Naive thymus-derived CD4-positive, alpha-beta T cell (primary cell): ENCODE measurements at regions of chr11 and their contacts with region 1.

Region 1: GRCh38 chr11:123707606-123708205 is 33.8 kb downstream of the ZNF202 start:
- DNase-seq: peak; percentile 29 to 70 (median 58)
- ATAC-seq: peak; percentile 63
- H3K4me3 ChIP-seq: no peak overlapping the region
- H3K4me3 Mint-ChIP-seq: no peak overlapping the region
- H3K27ac ChIP-seq: no peak overlapping the region
- H3K27ac Mint-ChIP-seq: peak overlapping the region in 1 of 9 donors; percentile 18
- H3K4me1 ChIP-seq: no peaks in the 10 kb centered on the region
- H3K4me1 Mint-ChIP-seq: peaks cover 0 to 4% (median 0%) of the 10 kb centered on the region in 7 donors
- H3K27me3 ChIP-seq: no peaks in the 10 kb centered on the region
- H3K27me3 Mint-ChIP-seq: peaks cover 9 to 21% (median 17%) of the 10 kb centered on the region in 5 donors

Region 2: DNA sequence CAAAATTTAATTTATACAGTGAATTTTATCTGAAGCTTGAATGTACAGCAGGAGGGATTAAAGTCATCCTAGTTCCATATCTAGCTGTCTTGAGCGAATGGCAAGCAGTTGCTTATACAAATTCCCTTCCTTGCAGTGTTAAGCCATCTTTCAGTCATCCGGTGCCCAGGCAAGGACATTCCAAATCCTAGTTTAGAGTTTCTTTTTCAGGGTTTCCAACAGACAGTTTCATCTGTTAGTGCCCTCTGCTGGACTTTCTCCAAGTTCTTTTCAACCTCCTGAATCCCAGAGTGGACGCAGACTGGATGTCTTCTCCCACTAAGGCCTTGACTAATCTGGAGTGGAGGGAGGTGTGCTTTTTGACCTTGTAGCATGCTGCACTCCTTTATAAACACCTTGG is 232.2 kb before region 1 on chr11:
- CTCF ChIA-PET with region 1: no interaction called
- POLR2A ChIA-PET with region 1: no interaction called
- intact Hi-C with region 1: no loop called
- DNase-seq: no peak
- ATAC-seq: no peak
- H3K4me3 ChIP-seq: no peak overlapping the region
- H3K4me3 Mint-ChIP-seq: no peak overlapping the region
- H3K27ac ChIP-seq: no peak overlapping the region
- H3K27ac Mint-ChIP-seq: no peak overlapping the region
- H3K4me1 ChIP-seq: no peaks in the 10 kb centered on the region
- H3K4me1 Mint-ChIP-seq: peaks cover 0 to 54% (median 5%) of the 10 kb centered on the region in 7 donors
- H3K27me3 ChIP-seq: no peaks in the 10 kb centered on the region
- H3K27me3 Mint-ChIP-seq: no peaks in the 10 kb centered on the region

Region 3: GRCh38 chr11:123511037-123511870 is 196.5 kb before region 1 on chr11:
- CTCF ChIA-PET with region 1: no interaction called
- POLR2A ChIA-PET with region 1: no interaction called
- intact Hi-C with region 1: loop called in 1 of 2 experiments (anchors 2 kb)
- DNase-seq: peak; percentile 19 to 75 (median 50)
- ATAC-seq: peak; percentile 96
- H3K4me3 ChIP-seq: no peak overlapping the region
- H3K4me3 Mint-ChIP-seq: no peak overlapping the region
- H3K27ac ChIP-seq: no peak overlapping the region
- H3K27ac Mint-ChIP-seq: peak overlapping the region in 1 of 9 donors; percentile 58
- H3K4me1 ChIP-seq: peaks cover 0 to 3% of the 10 kb centered on the region in 2 donors
- H3K4me1 Mint-ChIP-seq: peaks cover 4 to 50% (median 6%) of the 10 kb centered on the region in 7 donors
- H3K27me3 ChIP-seq: no peaks in the 10 kb centered on the region
- H3K27me3 Mint-ChIP-seq: peaks cover 0 to 3% (median 0%) of the 10 kb centered on the region in 5 donors

Region 4: DNA sequence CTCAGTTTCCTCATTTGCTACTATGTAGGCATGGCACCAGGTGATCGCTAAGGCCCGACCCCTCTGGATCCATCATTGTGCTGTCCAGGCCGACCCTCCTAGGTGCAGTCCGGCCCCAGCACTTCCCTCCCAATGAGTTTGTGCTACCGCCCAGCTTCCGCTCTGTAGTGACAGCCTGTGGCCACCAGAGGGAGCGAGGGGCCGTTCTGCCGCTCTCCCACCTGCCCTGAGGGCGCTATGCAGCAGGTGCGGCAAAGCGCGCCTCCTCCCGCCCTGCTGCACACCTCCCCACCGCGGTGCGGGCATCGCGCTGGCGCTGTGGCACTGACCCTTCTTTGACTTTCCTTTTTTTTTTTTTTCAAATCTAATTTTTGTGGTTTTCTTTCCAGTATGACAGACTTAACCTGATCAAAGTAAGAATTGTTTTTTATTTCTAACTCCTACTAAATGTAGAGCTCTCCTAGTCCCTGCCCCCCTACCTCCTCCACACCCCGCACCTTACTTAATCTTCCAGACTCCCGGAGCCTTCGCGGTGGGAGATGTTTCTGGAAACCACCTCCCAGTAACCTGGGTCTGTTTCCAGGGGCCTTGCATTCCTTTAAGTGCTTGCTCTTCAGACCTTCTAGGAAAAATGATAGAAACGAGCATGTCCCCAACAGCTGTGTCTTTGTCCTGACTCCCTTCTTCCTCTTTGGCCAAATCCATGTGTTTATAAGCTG is 127.0 kb before region 1 on chr11:
- CTCF ChIA-PET with region 1: interaction called, 26 read pairs
- POLR2A ChIA-PET with region 1: interaction called, 3 read pairs
- intact Hi-C with region 1: loop called (anchors 1 to 2 kb)
- DNase-seq: peak; percentile 43 to 71 (median 56)
- ATAC-seq: peak; percentile 91
- H3K4me3 ChIP-seq: no peak overlapping the region
- H3K4me3 Mint-ChIP-seq: peak overlapping the region in 5 of 10 donors; percentile 9 to 62 (median 25)
- H3K27ac ChIP-seq: no peak overlapping the region
- H3K27ac Mint-ChIP-seq: peak overlapping the region in 2 of 9 donors; percentile 4 to 36
- H3K4me1 ChIP-seq: peaks cover 0 to 4% of the 10 kb centered on the region in 2 donors
- H3K4me1 Mint-ChIP-seq: peaks cover 7 to 30% (median 18%) of the 10 kb centered on the region in 7 donors
- H3K27me3 ChIP-seq: no peaks in the 10 kb centered on the region
- H3K27me3 Mint-ChIP-seq: peaks cover 0 to 4% (median 0%) of the 10 kb centered on the region in 5 donors

Region 5: DNA sequence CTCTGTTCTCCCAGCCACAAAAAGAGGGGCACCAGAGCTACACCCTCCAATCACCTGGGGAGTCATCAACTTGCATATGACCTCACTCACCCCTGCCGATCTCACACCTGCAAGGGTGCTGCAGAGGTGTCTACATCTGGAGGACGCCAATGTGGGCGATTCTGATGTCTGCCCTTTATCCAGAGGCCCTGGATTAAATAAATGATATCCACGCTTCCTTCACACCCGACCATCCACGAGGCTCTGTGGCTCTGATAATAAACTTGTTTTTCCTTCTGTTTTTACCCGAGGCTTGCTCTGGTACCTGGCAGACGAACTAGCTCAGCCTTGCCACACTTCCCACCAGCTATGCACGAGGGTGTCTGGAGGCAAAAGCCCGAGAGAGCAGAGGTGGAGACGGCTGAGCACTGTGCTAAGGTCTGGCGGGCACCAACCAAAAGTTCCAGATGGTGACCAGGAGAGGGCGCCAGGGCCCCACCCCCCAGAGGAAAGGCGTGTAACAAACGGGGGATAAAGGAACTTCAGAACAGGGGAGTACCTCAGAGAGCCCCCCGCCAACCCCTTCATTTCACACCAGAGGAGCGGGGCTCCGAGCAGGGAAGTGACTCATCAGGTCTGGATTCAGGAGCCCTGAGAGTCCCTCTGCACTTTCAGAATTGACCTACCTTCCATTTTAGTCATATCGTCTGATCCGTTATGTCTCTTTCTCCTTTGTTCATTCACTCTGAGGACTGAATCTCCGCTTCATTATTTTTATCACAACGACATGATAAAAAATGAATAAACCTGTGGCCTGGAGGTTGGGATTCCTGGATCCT is 66.8 kb before region 1 on chr11:
- CTCF ChIA-PET with region 1: interaction called, 99 read pairs
- POLR2A ChIA-PET with region 1: no interaction called
- intact Hi-C with region 1: loop called (anchors 1 kb)
- DNase-seq: peak; percentile 29 to 65 (median 56)
- ATAC-seq: peak; percentile 77
- H3K4me3 ChIP-seq: no peak overlapping the region
- H3K4me3 Mint-ChIP-seq: no peak overlapping the region
- H3K27ac ChIP-seq: no peak overlapping the region
- H3K27ac Mint-ChIP-seq: peak overlapping the region in 1 of 9 donors; percentile 69
- H3K4me1 ChIP-seq: no peaks in the 10 kb centered on the region
- H3K4me1 Mint-ChIP-seq: peaks cover 0 to 4% (median 2%) of the 10 kb centered on the region in 7 donors
- H3K27me3 ChIP-seq: no peaks in the 10 kb centered on the region
- H3K27me3 Mint-ChIP-seq: peaks cover 11 to 46% (median 27%) of the 10 kb centered on the region in 5 donors

Region 6: DNA sequence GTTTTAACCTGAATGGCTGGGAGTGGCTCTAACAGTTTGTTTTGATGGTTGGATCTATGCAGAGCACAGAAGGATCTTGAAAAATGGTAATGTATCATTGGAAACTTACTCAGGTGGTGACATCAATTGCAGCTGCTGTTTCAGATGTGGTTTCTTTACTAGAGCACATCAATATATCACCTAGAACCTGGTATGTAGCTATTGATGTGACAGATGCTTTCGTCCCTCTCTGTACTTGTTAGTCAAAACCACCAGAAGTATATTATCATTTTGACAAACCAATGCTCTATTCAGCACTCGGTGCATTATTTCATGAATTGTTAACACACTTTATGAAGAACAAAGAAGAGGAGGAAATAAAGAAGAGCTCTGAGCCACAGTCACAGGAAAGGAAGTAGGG is 26.7 kb before region 1 on chr11:
- CTCF ChIA-PET with region 1: interaction called, 5 read pairs
- POLR2A ChIA-PET with region 1: no interaction called
- intact Hi-C with region 1: loop called in 1 of 2 experiments (anchors 1 kb)
- DNase-seq: peak in 7 of 9 donors; percentile 58 to 89 (median 80)
- ATAC-seq: peak; percentile 97
- H3K4me3 ChIP-seq: no peak overlapping the region
- H3K4me3 Mint-ChIP-seq: peak overlapping the region in 9 of 10 donors; percentile 0 to 54 (median 27)
- H3K27ac ChIP-seq: peak overlapping the region; percentile 48
- H3K27ac Mint-ChIP-seq: peak overlapping the region in 8 of 9 donors; percentile 68 to 86 (median 74)
- H3K4me1 ChIP-seq: peaks cover 0 to 26% of the 10 kb centered on the region in 2 donors
- H3K4me1 Mint-ChIP-seq: peaks cover 10 to 45% (median 26%) of the 10 kb centered on the region in 7 donors
- H3K27me3 ChIP-seq: no peaks in the 10 kb centered on the region
- H3K27me3 Mint-ChIP-seq: peaks cover 0 to 35% (median 0%) of the 10 kb centered on the region in 5 donors

Region 7: DNA sequence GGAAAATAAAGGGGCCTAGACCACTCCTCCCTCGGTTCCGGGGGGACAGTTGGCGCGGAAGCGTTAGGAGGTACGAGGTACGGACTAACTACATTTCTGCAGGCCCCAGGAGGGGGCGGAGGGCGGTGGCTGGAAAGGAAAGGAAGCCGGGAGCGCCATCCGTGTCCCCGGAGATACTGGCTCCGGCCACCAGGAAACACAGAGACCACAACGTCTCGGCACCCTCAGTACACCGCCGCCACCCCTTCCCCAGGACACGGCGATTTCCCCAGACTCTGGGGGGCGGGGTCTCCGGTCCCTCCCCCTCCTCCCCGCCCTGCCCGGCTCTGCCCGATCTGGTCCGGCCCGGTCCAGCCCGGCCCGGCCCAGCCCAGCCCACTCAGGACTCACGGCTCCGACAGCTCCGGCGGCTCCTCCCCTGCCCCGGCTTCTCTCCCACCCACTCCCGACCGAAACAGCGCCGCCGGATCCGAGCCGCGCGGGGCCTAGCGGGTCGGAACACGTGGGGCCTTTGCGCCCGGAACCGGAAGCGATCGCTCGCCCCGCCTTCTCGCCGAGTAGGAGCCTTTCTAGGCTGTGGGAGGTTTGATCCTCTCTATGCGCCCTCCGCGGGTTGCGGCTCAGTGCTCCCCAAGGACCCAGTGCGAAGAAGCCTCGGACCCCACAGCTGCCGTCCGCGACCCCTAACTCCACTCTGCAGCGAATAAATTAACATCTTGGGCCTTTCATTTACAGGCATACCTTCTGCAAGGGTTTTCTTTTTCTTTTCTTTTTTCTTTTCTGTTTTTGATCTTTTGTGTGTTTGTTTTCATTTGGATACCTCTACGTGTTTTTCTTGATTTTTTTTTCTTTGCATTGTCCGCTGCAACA is 33.7 kb after region 1 on chr11 and contains the start of gene ZNF202:
- CTCF ChIA-PET with region 1: no interaction called
- POLR2A ChIA-PET with region 1: interaction called, 3 read pairs
- intact Hi-C with region 1: loop called in 1 of 2 experiments (anchors 2 kb)
- DNase-seq: peak; percentile 83 to 92 (median 89)
- ATAC-seq: peak; percentile 98
- H3K4me3 ChIP-seq: peak within 1 kb of the TSS; percentile 92
- H3K4me3 Mint-ChIP-seq: peak within 1 kb of the TSS; percentile 85 to 100 (median 96)
- H3K27ac ChIP-seq: peak within 1 kb of the TSS; percentile 85
- H3K27ac Mint-ChIP-seq: peak within 1 kb of the TSS; percentile 91 to 98 (median 95)
- H3K4me1 ChIP-seq: peaks cover 19% of the 10 kb centered on the region in 2 donors
- H3K4me1 Mint-ChIP-seq: peaks cover 30 to 57% (median 46%) of the 10 kb centered on the region in 7 donors
- H3K27me3 ChIP-seq: no peaks in the 10 kb centered on the region
- H3K27me3 Mint-ChIP-seq: peaks cover 0 to 24% (median 6%) of the 10 kb centered on the region in 5 donors
- total RNA-seq, gene ZNF202: 13.0 to 27.0 (median 18.6) TPM

Region 8: GRCh38 chr11:124123622-124124021 is 415.9 kb after region 1 on chr11:
- CTCF ChIA-PET with region 1: no interaction called
- POLR2A ChIA-PET with region 1: no interaction called
- intact Hi-C with region 1: no loop called
- DNase-seq: no peak
- ATAC-seq: no peak
- H3K4me3 ChIP-seq: no peak overlapping the region
- H3K4me3 Mint-ChIP-seq: no peak overlapping the region
- H3K27ac ChIP-seq: no peak overlapping the region
- H3K27ac Mint-ChIP-seq: peak overlapping the region in 2 of 9 donors; percentile 9 to 31
- H3K4me1 ChIP-seq: no peaks in the 10 kb centered on the region
- H3K4me1 Mint-ChIP-seq: peaks cover 0 to 7% (median 0%) of the 10 kb centered on the region in 7 donors
- H3K27me3 ChIP-seq: no peaks in the 10 kb centered on the region
- H3K27me3 Mint-ChIP-seq: peaks cover 0 to 3% (median 0%) of the 10 kb centered on the region in 5 donors